ENCODE measurements at regions of chr6 and their contacts with region 1.

Region 1: GRCh38 chr6:138869398-138869797 is 73.5 kb downstream of the ECT2L start:
- DNase-seq: no peak
- H3K4me3 Mint-ChIP-seq: no peak overlapping the region
- H3K27ac Mint-ChIP-seq: no peak overlapping the region
- H3K4me1 Mint-ChIP-seq: peaks cover 8% of the 10 kb centered on the region
- H3K27me3 Mint-ChIP-seq: peaks cover 6% of the 10 kb centered on the region

Region 2: DNA sequence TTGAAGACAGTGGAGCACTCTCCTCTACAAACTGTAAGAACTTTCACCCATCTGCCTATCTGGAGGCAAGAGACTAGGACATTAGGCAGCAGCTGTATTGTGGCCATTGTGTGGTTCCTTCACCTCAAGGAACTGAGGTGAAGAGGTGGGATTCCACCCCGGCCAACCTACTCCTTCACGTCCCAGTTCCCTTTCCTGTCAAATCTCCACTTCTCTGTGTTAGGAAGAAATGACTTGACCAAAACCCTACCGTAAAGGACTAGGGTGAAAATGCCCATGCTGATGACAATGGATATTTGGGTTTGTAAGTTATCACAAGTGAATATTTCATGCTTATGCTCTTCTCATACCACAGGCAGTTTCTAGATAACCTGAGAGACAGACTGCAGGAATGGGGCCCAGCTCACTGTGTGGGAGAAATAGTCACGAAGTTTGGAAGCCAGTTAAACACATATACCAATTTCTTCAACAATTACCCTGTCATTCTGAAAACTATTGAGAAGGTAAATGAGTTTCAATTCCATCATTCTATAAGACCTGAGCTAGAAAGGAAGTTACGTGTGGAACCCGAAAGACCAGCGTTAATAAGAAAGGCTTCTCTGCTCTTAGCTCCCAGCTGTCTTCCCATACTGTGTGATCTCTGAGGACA is 13.1 kb after region 1 on chr6:
- CTCF ChIA-PET with region 1: interaction called, 4 read pairs
- POLR2A ChIA-PET with region 1: interaction called, 10 read pairs
- intact Hi-C with region 1: loop called (anchors 1 kb)
- DNase-seq: peak; percentile 52
- H3K4me3 Mint-ChIP-seq: no peak overlapping the region
- H3K27ac Mint-ChIP-seq: peak overlapping the region; percentile 84
- H3K4me1 Mint-ChIP-seq: peaks cover 19% of the 10 kb centered on the region
- H3K27me3 Mint-ChIP-seq: no peaks in the 10 kb centered on the region

Region 3: GRCh38 chr6:138891255-138891986 is 22.0 kb after region 1 on chr6:
- CTCF ChIA-PET with region 1: no interaction called
- POLR2A ChIA-PET with region 1: interaction called, 3 read pairs
- intact Hi-C with region 1: loop called (anchors 1 kb)
- DNase-seq: no peak
- H3K4me3 Mint-ChIP-seq: no peak overlapping the region
- H3K27ac Mint-ChIP-seq: peak overlapping the region; percentile 29
- H3K4me1 Mint-ChIP-seq: peaks cover 12% of the 10 kb centered on the region
- H3K27me3 Mint-ChIP-seq: no peaks in the 10 kb centered on the region

Region 4: DNA sequence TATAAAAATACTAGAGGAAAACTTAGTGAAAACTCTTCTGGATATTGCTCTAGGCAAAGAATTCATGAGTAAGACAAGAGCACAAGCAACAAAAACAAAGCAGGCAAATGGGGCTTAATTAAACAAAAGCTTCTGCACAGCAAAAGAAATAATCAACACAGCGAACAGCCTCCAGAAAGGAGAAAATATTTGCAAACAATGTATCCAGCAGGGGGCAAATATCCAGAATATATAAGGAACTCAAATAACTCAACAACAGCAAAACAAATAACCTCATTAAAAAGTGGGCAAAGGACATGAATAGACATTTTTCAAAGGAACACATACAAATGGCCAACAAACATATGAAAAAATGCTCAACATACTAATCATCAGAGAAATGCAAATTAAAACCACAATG is 248.3 kb after region 1 on chr6:
- CTCF ChIA-PET with region 1: no interaction called
- POLR2A ChIA-PET with region 1: no interaction called
- intact Hi-C with region 1: loop called (anchors 10 kb)
- DNase-seq: no peak
- H3K4me3 Mint-ChIP-seq: no peak overlapping the region
- H3K27ac Mint-ChIP-seq: no peak overlapping the region
- H3K4me1 Mint-ChIP-seq: peaks cover 47% of the 10 kb centered on the region
- H3K27me3 Mint-ChIP-seq: no peaks in the 10 kb centered on the region